ENCODE measurements at regions of chr14 and their contacts with region 1.

Region 1: DNA sequence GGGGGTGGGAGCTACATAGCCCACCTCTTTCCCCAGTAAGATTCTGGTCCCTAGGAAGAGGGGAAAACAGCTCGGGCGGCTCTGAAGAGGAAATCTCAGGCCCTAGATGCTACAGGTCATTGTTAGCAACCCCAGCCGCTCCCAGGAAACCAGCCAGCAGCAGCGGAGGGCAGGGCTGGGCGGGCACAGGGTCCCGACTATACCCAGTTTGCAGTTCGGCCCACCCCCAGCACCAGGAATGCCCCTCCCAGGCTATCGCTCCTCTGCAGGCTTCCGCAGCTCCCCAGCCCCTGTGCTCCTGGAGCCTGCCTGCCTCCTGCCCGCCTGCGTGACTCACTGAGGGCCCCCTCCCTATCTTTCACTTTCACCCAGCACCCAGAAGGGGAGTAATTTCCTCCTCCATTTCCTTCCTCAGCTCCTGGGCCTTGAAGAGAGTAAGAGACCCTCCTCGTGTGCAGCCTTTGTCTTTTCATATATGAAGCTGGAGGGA is 27.2 kb upstream of the PNMA1 start:
- DNase-seq: peak; percentile 83
- ATAC-seq: peak; percentile 71
- H3K4me3 Mint-ChIP-seq: peak overlapping the region; percentile 78
- H3K27ac Mint-ChIP-seq: peak overlapping the region; percentile 92
- H3K4me1 Mint-ChIP-seq: peaks cover 71% of the 10 kb centered on the region
- H3K27me3 Mint-ChIP-seq: no peaks in the 10 kb centered on the region

Region 2: GRCh38 chr14:73472185-73473114 is 269.0 kb before region 1 on chr14:
- CTCF ChIA-PET with region 1: no interaction called
- DNase-seq: no peak
- ATAC-seq: peak; percentile 81
- H3K4me3 Mint-ChIP-seq: no peak overlapping the region
- H3K27ac Mint-ChIP-seq: no peak overlapping the region
- H3K4me1 Mint-ChIP-seq: peaks cover 7% of the 10 kb centered on the region
- H3K27me3 Mint-ChIP-seq: no peaks in the 10 kb centered on the region

Region 3: GRCh38 chr14:73728717-73729330 is 12.6 kb before region 1 on chr14:
- CTCF ChIA-PET with region 1: interaction called, 118 read pairs
- DNase-seq: peak; percentile 91
- ATAC-seq: peak; percentile 95
- H3K4me3 Mint-ChIP-seq: no peak overlapping the region
- H3K27ac Mint-ChIP-seq: peak overlapping the region; percentile 78
- H3K4me1 Mint-ChIP-seq: peaks cover 44% of the 10 kb centered on the region
- H3K27me3 Mint-ChIP-seq: no peaks in the 10 kb centered on the region

Region 4: DNA sequence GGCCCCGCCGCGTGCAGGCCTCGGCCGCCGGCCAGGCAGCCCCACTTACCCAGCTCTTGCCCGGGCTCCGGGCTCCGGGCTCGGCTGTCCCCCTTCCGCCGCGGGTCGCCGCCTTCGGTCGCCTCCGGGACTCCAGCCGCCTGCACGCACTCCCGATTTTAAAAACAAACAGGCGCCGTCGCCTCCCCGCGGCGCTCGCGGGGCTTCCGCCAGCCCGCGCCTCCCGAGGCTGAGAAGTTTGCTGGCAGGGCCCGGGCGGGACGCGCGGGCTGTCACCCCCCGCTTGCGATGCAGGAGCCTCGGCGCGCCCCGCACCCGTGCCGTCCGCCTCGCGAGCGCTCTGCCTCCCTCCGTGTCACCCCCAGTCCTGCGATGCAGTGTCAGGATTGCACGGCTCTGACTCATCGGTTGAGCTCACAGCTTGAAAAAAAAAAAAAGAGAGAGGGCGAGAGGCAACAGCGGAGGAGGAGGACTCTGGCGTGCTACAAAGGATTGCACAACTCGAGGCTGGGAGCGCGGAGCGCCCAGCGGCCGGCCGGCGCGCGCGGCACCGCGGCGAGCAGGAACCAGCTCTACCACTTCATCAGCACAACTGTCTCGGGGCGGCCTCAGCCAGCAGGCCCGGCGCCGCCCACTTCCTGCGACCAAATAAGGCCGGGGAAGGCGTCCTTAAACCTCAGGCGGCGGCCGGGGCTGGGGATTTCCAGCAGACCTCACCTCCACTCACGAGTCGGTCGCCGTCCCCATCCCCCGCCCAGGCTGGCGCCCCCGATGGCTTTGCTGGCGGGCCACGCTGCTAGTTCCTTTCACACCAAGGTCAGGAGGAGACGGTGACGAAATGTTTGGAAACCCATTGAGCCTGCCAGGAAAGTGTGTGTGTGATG is 18.5 kb after region 1 on chr14:
- CTCF ChIA-PET with region 1: interaction called, 82 read pairs
- DNase-seq: peak; percentile 97
- ATAC-seq: peak; percentile 79
- H3K4me3 Mint-ChIP-seq: peak overlapping the region; percentile 87
- H3K27ac Mint-ChIP-seq: peak overlapping the region; percentile 90
- H3K4me1 Mint-ChIP-seq: peaks cover 77% of the 10 kb centered on the region
- H3K27me3 Mint-ChIP-seq: no peaks in the 10 kb centered on the region

Region 5: GRCh38 chr14:73785873-73786695 is 44.7 kb after region 1 on chr14:
- CTCF ChIA-PET with region 1: interaction called, 30 read pairs
- DNase-seq: peak; percentile 88
- ATAC-seq: peak; percentile 67
- H3K4me3 Mint-ChIP-seq: peak overlapping the region; percentile 85
- H3K27ac Mint-ChIP-seq: peak overlapping the region; percentile 95
- H3K4me1 Mint-ChIP-seq: peaks cover 56% of the 10 kb centered on the region
- H3K27me3 Mint-ChIP-seq: no peaks in the 10 kb centered on the region

Measured in activated CD8-positive, alpha-beta memory T cell treated with anti-CD3 and anti-CD28 coated beads, Interleukin-2, amount 10 ng/mL, durations not matched to agents 7 days and 5 days (primary cell).